AG04449 (cell line): ENCODE measurements at regions of chr12 and their contacts with region 1.

Region 1: GRCh38 chr12:48851883-48852733 is at the start of gene DDX23:
- DNase-seq: peak; percentile 83
- H3K4me3 ChIP-seq: peak within 1 kb of the TSS; percentile 97
- CTCF ChIP-seq: no peak

Region 2: GRCh38 chr12:48838048-48838447 is 14.1 kb before region 1 on chr12:
- CTCF ChIA-PET with region 1: interaction called, 13 read pairs
- POLR2A ChIA-PET with region 1: no interaction called
- DNase-seq: no peak
- H3K4me3 ChIP-seq: no peak overlapping the region
- CTCF ChIP-seq: no peak

Region 3: GRCh38 chr12:48890657-48891418 is 38.7 kb after region 1 on chr12:
- CTCF ChIA-PET with region 1: interaction called, 852 read pairs
- POLR2A ChIA-PET with region 1: no interaction called
- DNase-seq: no peak
- H3K4me3 ChIP-seq: peak overlapping the region; percentile 49
- CTCF ChIP-seq: peak; percentile 99

Region 4: GRCh38 chr12:48936379-48936979 is 84.4 kb after region 1 on chr12:
- CTCF ChIA-PET with region 1: interaction called, 253 read pairs
- POLR2A ChIA-PET with region 1: no interaction called
- DNase-seq: no peak
- H3K4me3 ChIP-seq: no peak overlapping the region
- CTCF ChIP-seq: peak; percentile 78

Region 5: GRCh38 chr12:48977315-48978281 is 125.5 kb after region 1 on chr12:
- CTCF ChIA-PET with region 1: interaction called, 46 read pairs
- POLR2A ChIA-PET with region 1: no interaction called
- DNase-seq: no peak
- H3K4me3 ChIP-seq: no peak overlapping the region
- CTCF ChIP-seq: peak; percentile 92

Region 6: DNA sequence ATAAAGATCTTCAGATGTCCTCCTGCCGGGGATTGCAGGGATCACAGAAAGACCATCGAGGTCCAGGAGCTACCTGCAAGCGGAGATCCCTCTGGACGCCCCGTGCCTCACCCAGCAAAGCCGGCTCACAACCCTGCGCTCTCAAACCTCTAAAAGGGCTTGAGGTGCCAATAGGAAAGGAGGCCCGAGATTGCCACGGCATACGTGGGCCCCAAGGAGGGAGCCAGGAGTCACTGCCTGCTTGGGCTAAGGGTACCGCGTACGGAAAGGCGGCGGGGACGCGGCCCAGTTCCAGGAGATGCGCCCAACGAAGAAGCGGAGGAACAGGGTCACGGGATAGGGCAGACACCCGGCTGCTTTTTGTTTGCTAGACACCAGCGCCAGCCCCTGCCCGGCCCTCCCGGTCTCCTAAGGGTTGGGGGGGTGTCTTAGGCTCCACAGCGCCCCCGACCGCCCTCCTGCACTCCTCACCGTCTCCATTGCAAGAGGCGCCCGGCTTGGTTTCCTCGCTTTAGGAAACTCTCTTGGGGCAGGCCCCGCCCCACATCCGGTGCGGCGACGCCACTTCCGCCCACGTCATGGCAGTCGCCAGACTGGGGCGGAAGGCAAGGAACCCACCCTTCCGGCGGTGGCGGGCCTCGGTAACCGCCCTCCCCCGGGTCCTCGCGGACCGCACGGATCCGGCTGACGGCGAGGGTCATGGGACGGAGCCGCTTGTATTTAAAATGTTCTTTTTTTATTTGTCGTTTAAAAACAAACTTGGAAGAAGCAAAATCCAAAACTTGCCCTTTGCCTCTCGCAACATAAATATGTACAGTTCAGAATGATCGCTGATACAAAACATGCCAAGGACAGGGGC is 166.4 kb after region 1 on chr12 and contains the start of gene PRKAG1:
- CTCF ChIA-PET with region 1: interaction called, 15 read pairs
- POLR2A ChIA-PET with region 1: no interaction called
- DNase-seq: peak; percentile 77
- H3K4me3 ChIP-seq: peak within 1 kb of the TSS; percentile 98
- CTCF ChIP-seq: peak; percentile 76